PC-3 (cell line): ENCODE measurements at regions of chr3 and their contacts with region 1.

Region 1: DNA sequence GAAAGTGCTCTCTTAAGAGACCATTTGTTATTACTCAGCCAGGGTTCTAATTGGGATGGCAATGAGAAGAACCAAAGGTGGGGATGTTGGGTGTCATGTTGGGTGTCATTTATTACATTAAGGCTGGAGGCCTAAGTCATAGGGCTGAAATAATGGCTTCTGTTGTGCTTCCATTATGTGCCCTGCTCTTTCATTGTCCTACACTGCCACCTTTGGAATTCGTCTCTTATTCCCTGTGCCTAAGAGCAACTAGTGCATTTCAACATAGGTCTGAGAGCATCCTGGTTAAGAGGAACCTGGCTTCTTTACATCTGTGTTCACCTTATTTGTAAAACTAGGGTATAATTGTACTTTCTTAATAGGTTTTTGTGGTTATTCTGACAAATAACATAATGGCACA is 32.2 kb downstream of the RIOX2 start:
- DNase-seq: peak; percentile 19
- ATAC-seq: peak; percentile 67
- H3K4me3 ChIP-seq: no peak overlapping the region
- H3K27ac ChIP-seq: no peak overlapping the region
- H3K4me1 ChIP-seq: no peaks in the 10 kb centered on the region
- H3K27me3 ChIP-seq: no peaks in the 10 kb centered on the region
- CTCF ChIP-seq: peak; percentile 37; the same call in 1 of the 2 replicates

Region 2: GRCh38 chr3:97793420-97794019 is 146.5 kb before region 1 on chr3:
- CTCF ChIA-PET with region 1: no interaction called
- POLR2A ChIA-PET with region 1: no interaction called
- intact Hi-C with region 1: loop called (anchors 1 kb)
- DNase-seq: peak; percentile 71
- ATAC-seq: peak; percentile 60
- H3K4me3 ChIP-seq: no peak overlapping the region
- H3K27ac ChIP-seq: no peak overlapping the region
- H3K4me1 ChIP-seq: no peaks in the 10 kb centered on the region
- H3K27me3 ChIP-seq: no peaks in the 10 kb centered on the region
- CTCF ChIP-seq: peak; percentile 92

Region 3: GRCh38 chr3:97952280-97952679 is 12.2 kb after region 1 on chr3:
- CTCF ChIA-PET with region 1: no interaction called
- POLR2A ChIA-PET with region 1: no interaction called
- intact Hi-C with region 1: no loop called
- DNase-seq: peak; percentile 25
- ATAC-seq: no peak
- H3K4me3 ChIP-seq: no peak overlapping the region
- H3K27ac ChIP-seq: peak overlapping the region; percentile 36; the same call in 1 of the 2 replicates
- H3K4me1 ChIP-seq: peaks cover 13% of the 10 kb centered on the region
- H3K27me3 ChIP-seq: no peaks in the 10 kb centered on the region
- CTCF ChIP-seq: no peak